ENCODE measurements at regions of chr2 and their contacts with region 1.

Region 1: DNA sequence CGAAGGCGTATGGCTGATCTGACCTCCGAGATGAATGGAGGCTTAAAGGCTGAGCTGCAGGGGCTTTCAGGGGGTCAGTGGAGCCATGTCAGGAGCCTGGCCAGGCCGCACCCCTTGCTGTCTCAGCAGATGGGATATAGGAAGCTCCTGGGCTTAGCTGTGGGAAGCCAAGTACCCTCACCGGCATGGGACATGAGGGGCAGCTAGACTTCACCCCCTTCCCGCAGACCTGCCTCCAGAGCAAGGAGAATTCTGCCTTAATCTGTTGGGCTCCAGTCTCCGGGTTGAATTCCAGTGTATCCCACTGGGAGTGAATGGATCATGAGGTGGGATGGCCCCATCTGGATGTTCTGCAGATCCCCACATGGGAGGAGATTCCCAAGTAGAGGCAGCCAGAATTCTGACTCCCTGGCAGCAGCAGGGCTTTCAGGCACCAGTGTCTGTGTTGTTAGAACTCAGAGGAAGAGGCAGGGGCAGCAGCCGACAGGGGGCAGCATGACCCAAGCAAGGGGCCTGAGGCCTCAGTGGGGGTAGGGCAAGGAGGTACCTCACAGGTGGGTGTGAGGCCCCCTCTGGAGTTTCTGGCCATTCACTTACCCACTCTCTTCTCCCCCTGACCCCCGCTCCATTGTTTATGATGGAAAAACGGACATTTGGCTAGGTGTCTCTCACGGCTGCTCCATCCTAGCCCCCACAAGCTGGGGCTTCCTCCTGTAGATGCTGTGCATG is 19.1 kb downstream of the CAPG start:
- DNase-seq: peak; percentile 82
- ATAC-seq: peak; percentile 82
- H3K4me3 Mint-ChIP-seq: no peak overlapping the region
- H3K27ac Mint-ChIP-seq: no peak overlapping the region
- H3K4me1 Mint-ChIP-seq: peaks cover 18% of the 10 kb centered on the region
- H3K27me3 Mint-ChIP-seq: no peaks in the 10 kb centered on the region

Region 2: DNA sequence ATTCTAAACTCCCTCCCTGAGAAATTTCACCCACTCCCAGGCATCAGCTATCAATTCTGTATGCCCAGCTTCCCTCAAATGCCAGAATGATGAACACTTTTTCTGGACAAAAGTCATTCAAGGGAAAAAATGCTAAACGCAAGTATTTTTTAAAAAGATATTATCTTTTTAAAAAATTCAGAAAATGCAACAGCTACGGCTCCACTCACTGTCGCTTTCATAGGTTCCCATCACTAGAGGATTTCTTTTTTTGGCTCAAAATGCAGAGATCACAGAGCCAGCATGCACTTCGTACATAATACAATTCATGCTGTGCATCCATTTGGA is 13.9 kb after region 1 on chr2:
- CTCF ChIA-PET with region 1: interaction called, 16 read pairs
- POLR2A ChIA-PET with region 1: interaction called, 5 read pairs
- DNase-seq: no peak
- ATAC-seq: no peak
- H3K4me3 Mint-ChIP-seq: peak overlapping the region; percentile 69
- H3K27ac Mint-ChIP-seq: peak overlapping the region; percentile 82
- H3K4me1 Mint-ChIP-seq: peaks cover 54% of the 10 kb centered on the region
- H3K27me3 Mint-ChIP-seq: no peaks in the 10 kb centered on the region